ENCODE measurements at regions of chr2 and their contacts with region 1.

Region 1: GRCh38 chr2:211745295-211746097 is 793.1 kb downstream of the ERBB4 start:
- DNase-seq: peak; percentile 68
- H3K4me3 Mint-ChIP-seq: no peak overlapping the region
- H3K27ac Mint-ChIP-seq: no peak overlapping the region
- H3K4me1 Mint-ChIP-seq: no peaks in the 10 kb centered on the region
- H3K27me3 Mint-ChIP-seq: no peaks in the 10 kb centered on the region
- CTCF ChIP-seq: peak; percentile 88

Region 2: GRCh38 chr2:211203986-211204385 is 541.5 kb before region 1 on chr2:
- CTCF ChIA-PET with region 1: no interaction called
- intact Hi-C with region 1: no loop called
- DNase-seq: no peak
- H3K4me3 Mint-ChIP-seq: no peak overlapping the region
- H3K27ac Mint-ChIP-seq: peak overlapping the region; percentile 10
- H3K4me1 Mint-ChIP-seq: peaks cover 18% of the 10 kb centered on the region
- H3K27me3 Mint-ChIP-seq: no peaks in the 10 kb centered on the region
- CTCF ChIP-seq: no peak

Region 3: DNA sequence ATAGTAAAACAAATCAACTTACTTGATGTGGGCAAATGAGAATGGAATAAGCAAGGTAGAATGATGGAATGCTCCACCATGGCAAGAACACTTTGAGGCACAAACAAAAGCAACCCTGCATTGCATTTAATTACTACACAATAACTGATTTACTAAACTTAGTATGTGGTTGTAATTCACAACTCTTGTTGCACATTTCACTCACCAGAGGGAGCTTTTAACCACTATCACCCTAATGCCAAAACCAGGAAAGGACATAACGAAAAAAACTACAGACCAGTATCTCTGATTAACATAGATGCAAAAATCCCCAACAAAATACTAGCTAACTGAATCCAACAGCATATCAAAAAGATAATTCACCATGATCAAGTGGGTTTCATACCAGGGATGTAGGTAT is 529.3 kb before region 1 on chr2:
- CTCF ChIA-PET with region 1: no interaction called
- intact Hi-C with region 1: loop called (anchors 10 kb)
- DNase-seq: peak; percentile 6
- H3K4me3 Mint-ChIP-seq: no peak overlapping the region
- H3K27ac Mint-ChIP-seq: no peak overlapping the region
- H3K4me1 Mint-ChIP-seq: no peaks in the 10 kb centered on the region
- H3K27me3 Mint-ChIP-seq: no peaks in the 10 kb centered on the region
- CTCF ChIP-seq: peak; percentile 25

Region 4: DNA sequence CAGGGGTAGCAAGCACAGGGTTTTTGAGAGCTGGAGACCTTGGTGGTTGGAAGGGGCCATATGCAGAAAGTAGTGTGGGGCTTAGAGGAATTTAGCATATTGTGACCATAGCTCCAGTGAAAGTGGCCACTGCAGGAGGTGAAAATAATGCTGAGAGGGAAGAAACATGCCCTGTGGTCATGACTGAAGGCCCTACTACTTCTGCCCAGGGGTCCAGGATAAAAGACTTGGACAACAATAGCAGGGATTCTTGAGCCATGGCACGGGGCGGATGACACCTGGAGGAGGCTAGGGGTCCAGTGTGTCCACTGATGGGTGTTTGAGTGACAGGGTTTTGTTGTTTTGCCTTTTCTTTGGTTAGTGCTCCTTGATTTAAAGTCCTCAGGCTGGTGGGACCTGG is 494.5 kb before region 1 on chr2:
- CTCF ChIA-PET with region 1: no interaction called
- intact Hi-C with region 1: no loop called
- DNase-seq: no peak
- H3K4me3 Mint-ChIP-seq: no peak overlapping the region
- H3K27ac Mint-ChIP-seq: no peak overlapping the region
- H3K4me1 Mint-ChIP-seq: peaks cover 23% of the 10 kb centered on the region
- H3K27me3 Mint-ChIP-seq: no peaks in the 10 kb centered on the region
- CTCF ChIP-seq: no peak

Region 5: DNA sequence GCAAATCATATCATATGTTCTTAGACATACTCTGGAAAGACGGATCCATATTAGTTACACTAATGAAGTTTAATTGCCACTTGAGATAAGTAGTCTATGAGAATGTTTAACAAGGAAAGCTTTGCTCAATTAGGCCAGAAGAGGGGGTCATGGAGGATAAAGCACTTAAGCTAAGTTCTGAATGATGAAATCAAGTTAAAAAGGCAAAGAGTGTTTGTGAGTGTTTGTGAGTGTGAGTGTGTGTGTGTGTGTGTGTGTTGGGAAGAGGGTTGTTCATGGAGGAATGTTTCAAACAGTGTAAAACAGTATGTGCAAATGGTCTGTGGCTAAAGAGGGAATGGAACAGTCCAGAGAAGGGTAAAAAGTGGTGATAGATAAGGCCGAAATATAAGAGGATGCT is 432.2 kb after region 1 on chr2:
- CTCF ChIA-PET with region 1: no interaction called
- intact Hi-C with region 1: loop called (anchors 10 kb)
- DNase-seq: no peak
- H3K4me3 Mint-ChIP-seq: no peak overlapping the region
- H3K27ac Mint-ChIP-seq: no peak overlapping the region
- H3K4me1 Mint-ChIP-seq: no peaks in the 10 kb centered on the region
- H3K27me3 Mint-ChIP-seq: no peaks in the 10 kb centered on the region
- CTCF ChIP-seq: peak; percentile 14

Region 6: GRCh38 chr2:212402315-212402714 is 656.8 kb after region 1 on chr2:
- CTCF ChIA-PET with region 1: no interaction called
- intact Hi-C with region 1: loop called (anchors 10 kb)
- DNase-seq: no peak
- H3K4me3 Mint-ChIP-seq: no peak overlapping the region
- H3K27ac Mint-ChIP-seq: no peak overlapping the region
- H3K4me1 Mint-ChIP-seq: peaks cover 8% of the 10 kb centered on the region
- H3K27me3 Mint-ChIP-seq: no peaks in the 10 kb centered on the region
- CTCF ChIP-seq: no peak

Measured in Calu3 (cell line).